ENCODE measurements at regions of chr2 and their contacts with region 1.

Region 1: GRCh38 chr2:12716282-12717190 is at the start of gene TRIB2:
- DNase-seq: peak; percentile 94
- ATAC-seq: peak; percentile 84
- total RNA-seq, gene TRIB2: 32.1 TPM

Region 2: DNA sequence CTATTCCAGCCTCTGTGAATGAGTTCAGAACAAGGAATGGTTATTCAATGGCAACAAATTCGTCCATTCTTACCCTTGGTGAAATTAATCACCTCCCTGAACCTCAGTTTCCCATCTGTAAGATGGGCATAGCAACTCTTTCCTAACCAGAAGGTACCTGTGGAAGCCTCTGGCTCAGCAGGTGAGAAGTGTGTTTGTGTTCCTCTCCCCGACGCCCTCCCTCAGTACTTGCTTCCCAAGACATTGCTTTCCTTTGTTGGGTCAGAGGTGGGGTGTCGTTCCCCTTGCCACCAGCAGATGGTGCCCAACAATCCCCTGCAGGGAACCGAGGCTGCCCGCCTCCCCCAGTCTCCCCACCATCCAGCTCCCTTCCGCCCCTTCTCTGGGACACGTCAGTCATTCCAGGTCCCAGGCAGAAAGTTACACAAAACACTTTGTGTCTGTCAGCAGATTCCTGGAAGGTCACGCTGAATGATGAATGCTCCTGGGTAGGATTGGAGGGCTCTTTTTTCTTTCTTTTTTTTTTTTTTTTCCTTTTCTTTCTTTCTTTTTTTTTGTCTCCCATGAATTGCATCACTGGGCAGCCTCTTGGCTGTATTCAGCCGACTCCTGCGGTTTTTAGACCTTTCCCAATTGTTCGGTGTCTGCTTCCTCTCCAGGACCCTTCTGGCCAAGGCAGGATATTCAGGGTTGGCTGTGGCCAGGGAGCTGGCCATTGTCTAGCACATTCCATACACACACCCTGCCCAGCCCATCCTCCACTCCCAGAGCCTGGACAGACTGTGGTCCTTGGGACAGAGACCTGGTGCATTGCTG is 852.8 kb before region 1 on chr2:
- intact Hi-C with region 1: loop called (anchors 5 kb)
- DNase-seq: peak; percentile 89
- ATAC-seq: peak; percentile 94

Region 3: GRCh38 chr2:12416600-12416999 is 299.9 kb before region 1 on chr2:
- intact Hi-C with region 1: loop called (anchors 5 kb)
- DNase-seq: peak; percentile 73
- ATAC-seq: peak; percentile 59

Region 4: GRCh38 chr2:12807907-12808810 is 91.6 kb after region 1 on chr2:
- intact Hi-C with region 1: loop called (anchors 5 kb)
- DNase-seq: no peak
- ATAC-seq: peak; percentile 77

Region 5: GRCh38 chr2:12918835-12919445 is 202.4 kb after region 1 on chr2:
- intact Hi-C with region 1: loop called (anchors 5 kb)
- DNase-seq: peak; percentile 84
- ATAC-seq: peak; percentile 95

Region 6: DNA sequence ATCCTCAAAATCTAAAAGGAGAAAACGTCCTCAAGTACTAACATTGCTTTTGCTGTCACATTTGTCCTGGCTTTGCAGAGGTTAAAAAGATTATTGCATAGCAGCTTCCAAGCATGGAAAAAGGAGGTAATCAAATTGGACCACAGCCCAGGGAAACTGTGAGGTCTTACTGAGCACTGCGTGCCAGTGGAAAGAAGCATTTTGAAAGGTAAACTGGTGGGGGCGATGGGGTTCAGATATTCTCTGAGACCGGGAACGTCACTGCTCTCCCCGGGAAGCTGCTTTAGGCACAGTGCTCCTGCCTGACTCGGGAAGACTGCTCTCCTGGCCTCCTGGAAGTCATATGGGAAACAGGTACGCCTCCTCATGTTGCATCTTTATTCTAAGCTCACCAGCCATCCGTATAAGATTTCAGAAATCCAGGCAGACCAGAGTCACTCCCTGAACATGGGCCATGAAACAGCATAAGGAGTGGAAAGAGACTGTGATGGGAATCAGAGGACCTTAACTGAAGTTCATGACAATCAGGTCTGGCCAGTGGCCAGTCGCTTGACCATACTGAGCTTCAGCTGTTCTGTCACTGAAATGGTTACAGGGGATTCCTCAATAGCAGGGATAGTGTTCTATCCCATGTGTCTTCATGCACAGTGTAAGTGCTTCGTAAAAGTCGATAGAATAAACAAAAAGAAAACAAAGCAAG is 284.3 kb after region 1 on chr2:
- intact Hi-C with region 1: loop called (anchors 5 kb)
- DNase-seq: no peak
- ATAC-seq: peak; percentile 68

Measured in Right ventricle myocardium superior (tissue), 1 donor.